PC-9 (cell line): ENCODE measurements at regions of chr14 and their contacts with region 1.

Region 1: GRCh38 chr14:71629765-71630492 is 302.3 kb upstream of the RGS6 start:
- DNase-seq: no peak
- H3K4me3 ChIP-seq: no peak overlapping the region
- H3K27ac ChIP-seq: no peak overlapping the region
- H3K4me1 ChIP-seq: no peaks in the 10 kb centered on the region
- H3K27me3 ChIP-seq: no peaks in the 10 kb centered on the region
- CTCF ChIP-seq: no peak

Region 2: DNA sequence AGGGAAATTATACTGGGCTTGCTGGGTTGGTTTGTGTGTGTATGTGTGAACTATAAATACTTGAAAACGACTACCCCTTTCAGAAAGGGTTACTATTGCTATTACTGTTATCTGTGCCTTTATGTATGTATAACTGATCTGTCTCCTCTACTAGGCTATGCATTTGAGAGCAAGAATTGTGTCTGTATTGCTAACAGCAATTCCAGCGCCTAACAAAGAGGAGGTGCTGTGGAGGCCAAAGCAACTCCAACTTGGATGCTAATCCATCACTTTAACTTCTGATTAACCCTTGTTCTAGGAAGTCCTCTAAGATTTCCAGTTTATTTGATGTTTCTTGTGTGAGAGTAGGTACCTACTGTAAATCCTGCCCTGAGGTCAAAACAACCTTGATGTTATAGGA is 408.8 kb before region 1 on chr14:
- CTCF ChIA-PET with region 1: no interaction called
- POLR2A ChIA-PET with region 1: no interaction called
- intact Hi-C with region 1: no loop called
- DNase-seq: no peak
- H3K4me3 ChIP-seq: no peak overlapping the region
- H3K27ac ChIP-seq: peak overlapping the region; percentile 56
- H3K4me1 ChIP-seq: peaks cover 24% of the 10 kb centered on the region
- H3K27me3 ChIP-seq: no peaks in the 10 kb centered on the region
- CTCF ChIP-seq: no peak

Region 3: GRCh38 chr14:71647083-71647784 is 17.3 kb after region 1 on chr14:
- CTCF ChIA-PET with region 1: no interaction called
- POLR2A ChIA-PET with region 1: no interaction called
- intact Hi-C with region 1: loop called (anchors 1 kb)
- DNase-seq: peak; percentile 34 to 91
- H3K4me3 ChIP-seq: no peak overlapping the region
- H3K27ac ChIP-seq: peak overlapping the region; percentile 40
- H3K4me1 ChIP-seq: peaks cover 27% of the 10 kb centered on the region
- H3K27me3 ChIP-seq: no peaks in the 10 kb centered on the region
- CTCF ChIP-seq: no peak

Region 4: GRCh38 chr14:71739273-71739937 is 109.5 kb after region 1 on chr14:
- CTCF ChIA-PET with region 1: no interaction called
- POLR2A ChIA-PET with region 1: no interaction called
- intact Hi-C with region 1: no loop called
- DNase-seq: peak; percentile 26 to 46
- H3K4me3 ChIP-seq: no peak overlapping the region
- H3K27ac ChIP-seq: peak overlapping the region; percentile 23; the same call in 1 of the 2 replicates
- H3K4me1 ChIP-seq: 0 out of 2 replicates have a peak, but pooled peaks cover 10% of the 10 kb centered on the region
- H3K27me3 ChIP-seq: no peaks in the 10 kb centered on the region
- CTCF ChIP-seq: no peak